Caco-2 (cell line): ENCODE measurements at regions of chr11 and their contacts with region 1.

Region 1: DNA sequence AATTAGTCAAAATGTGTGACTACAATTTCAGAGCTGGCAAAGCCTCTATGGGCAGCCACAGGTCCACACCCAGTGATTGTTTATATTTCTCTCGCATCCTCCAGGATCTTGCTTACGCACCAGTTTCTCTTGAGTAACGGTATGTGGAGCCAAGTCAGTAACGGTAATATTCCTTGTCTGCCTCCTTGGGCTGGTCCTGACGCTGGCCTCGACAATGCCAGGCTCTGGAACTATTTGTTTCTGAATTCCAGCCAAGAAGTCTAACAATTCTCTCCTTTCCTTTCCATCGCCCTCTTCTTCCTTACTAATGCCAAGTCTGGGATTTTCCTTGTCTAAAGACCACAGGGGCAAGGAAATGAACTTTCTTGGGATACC is 10.0 kb upstream of the NUP160 start:
- DNase-seq: no peak
- H3K4me3 ChIP-seq: no peak overlapping the region
- H3K4me3 Mint-ChIP-seq: no peak overlapping the region
- H3K27ac Mint-ChIP-seq: no peak overlapping the region
- H3K4me1 ChIP-seq: peaks cover 17% of the 10 kb centered on the region; the same call in 1 of the 2 replicates
- H3K4me1 Mint-ChIP-seq: no peaks in the 10 kb centered on the region
- H3K27me3 ChIP-seq: no peaks in the 10 kb centered on the region
- H3K27me3 Mint-ChIP-seq: no peaks in the 10 kb centered on the region
- CTCF ChIP-seq: no peak

Region 2: GRCh38 chr11:47616726-47617416 is 241.3 kb before region 1 on chr11:
- CTCF ChIA-PET with region 1: no interaction called
- POLR2A ChIA-PET with region 1: no interaction called
- intact Hi-C with region 1: loop called (anchors 10 kb)
- DNase-seq: peak in 1 of 2 experiments; percentile 57
- H3K4me3 ChIP-seq: no peak overlapping the region
- H3K4me3 Mint-ChIP-seq: no peak overlapping the region
- H3K27ac Mint-ChIP-seq: no peak overlapping the region
- H3K4me1 ChIP-seq: no peaks in the 10 kb centered on the region
- H3K4me1 Mint-ChIP-seq: no peaks in the 10 kb centered on the region
- H3K27me3 ChIP-seq: no peaks in the 10 kb centered on the region
- H3K27me3 Mint-ChIP-seq: no peaks in the 10 kb centered on the region
- CTCF ChIP-seq: peak; percentile 47 to 84

Region 3: GRCh38 chr11:47837292-47837691 is 20.9 kb before region 1 on chr11:
- CTCF ChIA-PET with region 1: no interaction called
- POLR2A ChIA-PET with region 1: no interaction called
- intact Hi-C with region 1: no loop called
- DNase-seq: no peak
- H3K4me3 ChIP-seq: no peak overlapping the region
- H3K4me3 Mint-ChIP-seq: no peak overlapping the region
- H3K27ac Mint-ChIP-seq: no peak overlapping the region
- H3K4me1 ChIP-seq: no peaks in the 10 kb centered on the region
- H3K4me1 Mint-ChIP-seq: no peaks in the 10 kb centered on the region
- H3K27me3 ChIP-seq: no peaks in the 10 kb centered on the region
- H3K27me3 Mint-ChIP-seq: no peaks in the 10 kb centered on the region
- CTCF ChIP-seq: no peak

Region 4: DNA sequence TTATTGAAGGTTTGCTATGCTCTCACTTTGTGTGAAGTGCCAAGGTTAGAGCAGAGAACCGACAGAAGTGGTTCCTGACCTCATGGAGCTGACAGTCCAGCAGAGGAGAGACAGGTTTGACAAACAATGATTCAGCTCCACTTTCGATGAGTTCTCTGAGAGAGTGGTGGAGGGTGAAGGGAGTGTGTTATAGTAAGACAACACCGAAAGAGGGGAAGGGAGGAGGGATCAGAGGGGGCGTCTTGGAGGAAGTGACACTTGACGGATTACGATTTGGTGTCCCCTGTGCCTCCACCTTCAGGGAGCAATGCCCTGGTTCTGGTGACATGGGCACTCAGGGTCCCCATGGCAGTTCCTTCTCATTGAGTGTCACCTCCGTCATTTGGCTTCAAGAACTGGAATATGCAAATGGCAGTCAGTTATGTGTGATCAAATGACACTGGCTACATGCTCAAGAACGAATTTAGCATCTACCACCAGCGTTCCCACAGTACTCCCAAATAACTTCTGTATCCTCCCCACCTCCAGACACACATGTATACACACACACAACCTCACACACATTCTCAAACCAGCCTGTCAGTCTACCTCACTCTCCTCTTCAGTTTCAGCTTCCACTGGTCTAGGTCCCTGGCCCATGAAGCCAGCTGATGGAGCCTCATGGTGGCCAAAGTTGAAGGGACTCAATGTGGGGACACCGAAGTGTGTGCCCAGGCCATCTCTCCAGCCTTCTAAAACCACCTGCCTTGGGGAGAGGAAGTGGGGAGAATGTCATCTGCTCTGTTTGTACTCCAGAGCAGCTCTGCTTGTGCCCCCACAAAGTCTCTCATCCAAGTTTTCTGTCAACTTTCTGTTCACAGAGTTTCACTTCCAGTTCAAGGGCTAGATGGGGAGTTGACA is 21.4 kb after region 1 on chr11:
- CTCF ChIA-PET with region 1: no interaction called
- POLR2A ChIA-PET with region 1: no interaction called
- intact Hi-C with region 1: no loop called
- DNase-seq: no peak
- H3K4me3 ChIP-seq: no peak overlapping the region
- H3K4me3 Mint-ChIP-seq: no peak overlapping the region
- H3K27ac Mint-ChIP-seq: no peak overlapping the region
- H3K4me1 ChIP-seq: no peaks in the 10 kb centered on the region
- H3K4me1 Mint-ChIP-seq: no peaks in the 10 kb centered on the region
- H3K27me3 ChIP-seq: no peaks in the 10 kb centered on the region
- H3K27me3 Mint-ChIP-seq: no peaks in the 10 kb centered on the region
- CTCF ChIP-seq: no peak

Region 5: DNA sequence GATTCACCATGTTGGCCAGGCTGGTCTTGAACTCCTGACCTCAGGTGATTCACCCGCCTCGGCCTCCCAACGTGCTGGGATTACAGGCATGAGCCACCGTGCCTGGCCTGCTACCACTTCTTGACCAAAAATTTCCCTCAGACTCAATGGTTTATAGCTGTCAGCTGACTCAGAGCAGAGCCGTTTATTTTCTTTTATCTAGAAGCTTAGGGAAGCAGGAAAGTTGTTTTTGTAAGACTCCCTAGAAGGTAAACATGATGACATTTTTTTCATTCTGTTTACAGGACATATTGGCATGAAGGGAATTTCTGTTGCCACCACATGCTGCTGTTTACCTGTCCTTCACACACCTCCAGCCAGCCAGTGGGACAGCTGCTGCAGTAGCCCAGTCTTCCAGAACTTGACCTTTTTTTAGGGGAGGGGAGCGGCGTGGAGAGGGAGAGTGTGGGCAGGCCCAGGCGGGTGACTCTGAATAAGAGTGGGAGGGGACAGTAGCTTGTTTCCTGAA is 66.1 kb after region 1 on chr11:
- CTCF ChIA-PET with region 1: no interaction called
- POLR2A ChIA-PET with region 1: no interaction called
- intact Hi-C with region 1: loop called (anchors 2 kb)
- DNase-seq: peak; percentile 63
- H3K4me3 ChIP-seq: no peak overlapping the region
- H3K4me3 Mint-ChIP-seq: no peak overlapping the region
- H3K27ac Mint-ChIP-seq: peak overlapping the region; percentile 55
- H3K4me1 ChIP-seq: no peaks in the 10 kb centered on the region; the same call in none of the 2 replicates
- H3K4me1 Mint-ChIP-seq: peaks cover under 1% of the 10 kb centered on the region
- H3K27me3 ChIP-seq: no peaks in the 10 kb centered on the region
- H3K27me3 Mint-ChIP-seq: no peaks in the 10 kb centered on the region
- CTCF ChIP-seq: no peak